ENCODE measurements at regions of chrX and their contacts with region 1.

Region 1: GRCh38 chrX:21725496-21725895 is 32.4 kb downstream of the SMPX start:
- DNase-seq: no peak
- H3K4me3 ChIP-seq: no peak overlapping the region
- H3K27ac ChIP-seq: no peak overlapping the region
- H3K4me1 ChIP-seq: no peaks in the 10 kb centered on the region
- H3K27me3 ChIP-seq: no peaks in the 10 kb centered on the region
- CTCF ChIP-seq: peak in 2 of 3 experiments; percentile 59 to 61; a peak in 3 of 4 replicates
- EP300 ChIP-seq: no peak
- POLR2A ChIP-seq: no peak
- RAD21 ChIP-seq: peak; percentile 84 to 87

Region 2: DNA sequence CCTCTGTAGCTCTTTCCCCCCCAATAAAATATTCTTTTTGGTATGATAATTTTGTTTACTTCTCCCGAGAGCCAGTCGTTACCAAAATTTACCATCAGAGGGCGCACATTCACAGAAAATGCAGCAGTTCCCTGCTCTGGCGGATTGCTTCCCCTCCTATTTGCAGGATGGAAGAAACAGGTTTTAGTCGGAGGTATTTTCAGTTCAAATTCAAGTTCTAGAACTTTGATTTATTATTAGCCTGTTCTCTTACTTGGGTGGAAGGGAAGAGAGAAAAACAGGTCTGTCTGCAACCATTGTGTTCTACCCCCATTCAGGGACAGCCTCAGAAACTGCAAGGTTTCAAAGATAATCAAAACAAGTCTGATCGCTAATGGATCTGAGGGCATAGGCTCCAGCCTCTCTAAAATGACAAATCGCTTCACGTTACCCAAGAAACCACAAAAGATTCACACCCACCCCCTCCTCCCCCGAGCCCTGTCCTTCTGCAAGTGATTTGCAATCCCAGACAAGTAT is 1195.0 kb before region 1 on chrX:
- CTCF ChIA-PET with region 1: interaction called, 37 read pairs
- POLR2A ChIA-PET with region 1: no interaction called
- DNase-seq: peak in 1 of 2 experiments; percentile 63
- H3K4me3 ChIP-seq: peak overlapping the region in 1 of 4 experiments; percentile 35; a peak in 1 of 8 replicates
- H3K27ac ChIP-seq: no peak overlapping the region
- H3K4me1 ChIP-seq: no peaks in the 10 kb centered on the region
- H3K27me3 ChIP-seq: no peaks in the 10 kb centered on the region
- CTCF ChIP-seq: peak; percentile 16 to 59 (median 45)
- EP300 ChIP-seq: no peak
- POLR2A ChIP-seq: no peak
- RAD21 ChIP-seq: peak; percentile 83 to 86

Region 3: GRCh38 chrX:21708116-21708515 is 17.4 kb before region 1 on chrX:
- CTCF ChIA-PET with region 1: interaction called, 16 read pairs
- POLR2A ChIA-PET with region 1: no interaction called
- DNase-seq: no peak
- H3K4me3 ChIP-seq: no peak overlapping the region
- H3K27ac ChIP-seq: no peak overlapping the region
- H3K4me1 ChIP-seq: no peaks in the 10 kb centered on the region
- H3K27me3 ChIP-seq: no peaks in the 10 kb centered on the region
- CTCF ChIP-seq: peak in 2 of 3 experiments; percentile 10 to 29; a peak in 2 of 4 replicates
- EP300 ChIP-seq: no peak
- POLR2A ChIP-seq: no peak
- RAD21 ChIP-seq: peak; percentile 30 to 51